ENCODE measurements at regions of chr4 and their contacts with region 1.

Region 1: DNA sequence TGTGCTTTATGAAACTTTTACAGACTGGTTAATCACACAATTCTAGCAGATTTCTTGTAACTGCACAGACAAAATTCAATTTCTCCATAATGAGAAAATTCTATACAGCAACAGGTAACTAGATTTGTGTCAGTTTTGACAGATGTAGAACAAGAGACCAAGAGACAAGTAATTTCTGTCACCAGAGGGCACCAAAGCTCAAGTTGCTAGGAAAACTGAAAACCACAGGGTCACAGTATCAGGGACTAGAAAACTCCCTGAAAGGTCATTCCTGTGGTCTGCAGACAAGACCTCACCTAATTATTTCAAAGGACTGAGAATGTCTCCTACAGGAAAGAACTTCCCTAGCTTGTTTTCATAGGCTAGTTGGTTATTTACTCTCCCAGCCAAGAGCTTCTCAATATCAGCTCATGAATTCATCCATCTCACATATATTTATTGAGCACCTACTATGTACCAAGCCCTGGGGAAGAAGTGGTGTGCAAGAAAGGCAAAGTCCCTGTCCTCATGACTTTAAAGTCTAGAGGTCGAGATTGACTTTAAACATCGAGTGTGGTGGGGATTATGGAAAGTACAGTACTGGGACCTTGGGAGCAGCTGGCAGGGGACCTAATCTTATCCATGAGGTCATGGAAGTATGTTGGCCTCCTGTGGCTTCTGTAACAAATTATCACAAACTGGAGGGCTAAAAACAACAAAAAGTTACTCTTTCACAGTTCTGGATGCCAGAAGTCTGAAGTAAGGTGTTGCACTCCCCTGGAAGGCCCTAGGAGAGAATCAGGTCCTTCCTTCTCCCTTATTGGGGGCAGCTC is 47.8 kb upstream of the SETD7 start:
- DNase-seq: peak; percentile 56 to 85
- H3K4me3 ChIP-seq: no peak overlapping the region
- H3K27ac ChIP-seq: no peak overlapping the region
- H3K4me1 ChIP-seq: peaks cover 50% of the 10 kb centered on the region
- H3K27me3 ChIP-seq: no peaks in the 10 kb centered on the region
- CTCF ChIP-seq: peak; percentile 80

Region 2: DNA sequence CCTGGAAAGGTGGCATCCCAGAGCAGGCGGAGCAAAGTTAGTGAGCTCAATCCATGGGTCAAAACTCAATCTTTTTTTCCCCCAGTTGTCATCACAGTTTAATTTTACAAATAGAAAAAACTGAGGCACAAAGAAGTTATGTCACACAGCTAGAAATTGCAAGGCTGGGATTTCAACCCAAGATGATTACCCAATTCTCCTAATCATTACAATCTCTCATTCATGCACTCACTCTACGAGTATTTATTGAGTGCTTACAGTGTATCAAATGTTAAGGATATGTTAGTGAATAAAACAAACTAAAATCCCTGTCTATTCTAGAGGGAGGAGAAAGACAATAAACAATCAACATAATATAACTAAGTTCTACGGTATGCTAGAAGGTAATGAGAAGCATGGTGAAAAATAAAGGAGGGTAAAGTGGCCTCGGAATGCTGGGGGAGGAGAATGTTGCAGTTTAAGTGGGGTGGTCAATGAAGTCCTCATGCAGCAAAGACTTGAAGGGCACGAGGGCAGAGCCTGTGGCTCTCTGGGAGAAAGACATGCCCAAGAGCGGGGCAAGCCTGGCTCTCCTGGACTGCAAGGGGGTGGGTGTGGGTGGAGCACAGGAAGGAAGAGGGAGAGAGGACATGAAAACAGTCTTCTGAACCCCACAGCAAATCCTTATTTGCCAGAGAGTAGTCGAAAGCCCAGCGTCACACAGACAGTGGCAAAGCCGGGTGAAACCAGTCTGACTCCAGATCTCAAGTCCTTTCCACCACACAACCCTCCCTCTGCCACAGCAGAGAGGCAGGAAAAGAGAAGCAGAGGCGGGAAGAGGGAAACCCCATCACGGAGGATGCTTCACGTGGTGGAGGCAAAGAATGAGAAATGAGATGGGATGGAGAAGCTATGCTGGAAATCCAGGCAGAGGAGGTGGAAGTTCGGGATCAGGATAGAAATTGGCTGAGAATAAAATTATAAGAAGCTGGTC is 101.6 kb before region 1 on chr4:
- CTCF ChIA-PET with region 1: interaction called, 19 read pairs
- POLR2A ChIA-PET with region 1: no interaction called
- intact Hi-C with region 1: no loop called
- DNase-seq: no peak
- H3K4me3 ChIP-seq: no peak overlapping the region
- H3K27ac ChIP-seq: no peak overlapping the region
- H3K4me1 ChIP-seq: no peaks in the 10 kb centered on the region
- H3K27me3 ChIP-seq: no peaks in the 10 kb centered on the region
- CTCF ChIP-seq: no peak

Region 3: DNA sequence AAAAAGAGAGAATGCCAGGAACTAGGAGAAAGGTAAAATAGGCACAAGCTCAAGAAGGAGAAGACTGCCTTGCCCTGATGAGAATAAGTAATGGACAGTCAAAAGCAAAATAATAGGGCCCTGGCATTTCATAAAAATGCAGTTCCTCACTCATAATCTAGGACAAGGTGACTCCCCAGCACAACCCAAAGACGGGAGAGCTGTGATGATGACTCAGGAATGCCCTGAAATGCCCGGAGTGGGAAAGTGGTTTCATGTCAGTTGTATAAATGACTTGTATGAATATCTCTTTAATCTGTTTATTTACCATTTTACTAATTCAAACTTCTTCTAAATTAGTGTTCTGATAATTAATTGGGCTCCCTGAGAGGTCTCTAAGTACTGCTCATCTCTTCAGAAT is 19.0 kb before region 1 on chr4:
- CTCF ChIA-PET with region 1: interaction called, 10 read pairs
- POLR2A ChIA-PET with region 1: no interaction called
- intact Hi-C with region 1: no loop called
- DNase-seq: no peak
- H3K4me3 ChIP-seq: no peak overlapping the region
- H3K27ac ChIP-seq: no peak overlapping the region
- H3K4me1 ChIP-seq: no peaks in the 10 kb centered on the region
- H3K27me3 ChIP-seq: no peaks in the 10 kb centered on the region
- CTCF ChIP-seq: no peak

Region 4: GRCh38 chr4:139651282-139652194 is 47.8 kb after region 1 on chr4:
- CTCF ChIA-PET with region 1: interaction called, 9 read pairs
- POLR2A ChIA-PET with region 1: no interaction called
- intact Hi-C with region 1: loop called (anchors 1 kb)
- DNase-seq: peak; percentile 49 to 60
- H3K4me3 ChIP-seq: no peak overlapping the region
- H3K27ac ChIP-seq: no peak overlapping the region
- H3K4me1 ChIP-seq: peaks cover 16% of the 10 kb centered on the region
- H3K27me3 ChIP-seq: no peaks in the 10 kb centered on the region
- CTCF ChIP-seq: peak; percentile 93

Region 5: GRCh38 chr4:140252742-140253555 is 649.2 kb after region 1 on chr4:
- CTCF ChIA-PET with region 1: no interaction called
- POLR2A ChIA-PET with region 1: interaction called, 3 read pairs
- intact Hi-C with region 1: loop called (anchors 2 kb)
- DNase-seq: peak; percentile 40 to 76
- H3K4me3 ChIP-seq: peak overlapping the region; percentile 59
- H3K27ac ChIP-seq: peak overlapping the region; percentile 73
- H3K4me1 ChIP-seq: peaks cover 69% of the 10 kb centered on the region
- H3K27me3 ChIP-seq: no peaks in the 10 kb centered on the region
- CTCF ChIP-seq: peak; percentile 84